Activated B cell treated with CpG ODN at 0.5 μM for 24 hours (primary cell): ENCODE measurements at regions of chr6 and their contacts with region 1.

Region 1: DNA sequence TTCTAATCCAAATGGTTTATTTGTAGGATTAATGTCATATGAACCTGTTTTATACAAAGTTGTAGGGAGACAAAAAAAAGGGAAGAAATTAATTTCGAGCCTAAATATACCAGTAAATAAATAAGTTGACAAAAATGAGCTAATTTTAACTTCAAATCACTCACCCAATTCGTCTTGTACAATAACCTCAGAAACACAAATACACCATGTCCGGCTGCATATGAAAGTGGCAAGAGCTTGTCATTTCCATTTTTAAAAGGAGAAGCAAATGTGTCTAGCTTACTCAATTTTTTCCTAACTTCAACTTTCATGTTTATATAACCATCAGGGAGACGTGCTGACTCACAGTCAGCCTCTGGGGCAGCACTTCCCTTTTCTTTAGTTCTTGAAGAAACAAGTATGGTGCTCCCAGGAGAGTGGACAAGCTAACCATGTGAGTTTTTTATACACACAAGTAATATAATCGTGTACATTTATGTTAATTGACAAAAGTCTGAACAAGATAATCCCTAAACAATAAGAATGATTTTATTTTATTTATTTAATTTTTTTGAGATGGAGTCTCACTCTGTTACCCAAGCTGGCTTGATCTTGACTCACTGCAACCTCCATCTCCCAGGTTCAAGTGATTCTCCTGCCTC is 55.5 kb upstream of the SGK1 start:
- DNase-seq: no peak
- ATAC-seq: peak; percentile 97
- H3K4me3 Mint-ChIP-seq: peak overlapping the region; percentile 53
- H3K27ac Mint-ChIP-seq: peak overlapping the region; percentile 71
- H3K4me1 Mint-ChIP-seq: peaks cover 28% of the 10 kb centered on the region
- H3K27me3 Mint-ChIP-seq: no peaks in the 10 kb centered on the region
- CTCF ChIP-seq: no peak

Region 2: DNA sequence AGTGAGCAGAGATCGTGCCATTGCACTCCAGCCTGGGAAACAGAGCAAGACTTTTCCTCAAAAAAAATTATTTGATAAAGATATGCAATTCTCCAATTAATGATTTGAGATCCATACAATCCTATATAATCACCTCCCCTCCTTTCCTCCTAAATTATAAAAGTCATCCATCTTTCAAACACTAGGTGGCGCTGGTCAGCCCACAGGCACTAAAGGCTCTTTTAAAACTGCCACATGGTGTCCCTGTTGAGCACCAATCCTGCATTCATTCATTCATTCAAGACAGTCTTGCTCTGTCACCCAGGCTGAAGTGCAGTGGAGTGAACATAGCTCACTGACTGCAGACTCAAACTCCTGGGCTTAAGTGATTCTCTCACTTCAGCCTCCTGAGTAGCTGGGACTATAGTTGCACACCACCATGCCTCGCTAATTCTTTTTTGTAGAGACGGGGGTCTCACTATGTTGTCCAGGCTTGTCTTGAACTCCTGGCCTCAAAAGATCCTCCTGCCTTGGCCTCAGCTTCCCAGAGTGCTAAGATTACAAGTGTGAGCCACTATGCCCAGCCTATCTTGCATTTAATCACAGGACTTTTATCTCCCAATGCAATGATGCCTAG is 262.2 kb before region 1 on chr6:
- CTCF ChIA-PET with region 1: no interaction called
- POLR2A ChIA-PET with region 1: no interaction called
- intact Hi-C with region 1: no loop called
- DNase-seq: no peak
- ATAC-seq: no peak
- H3K4me3 Mint-ChIP-seq: no peak overlapping the region
- H3K27ac Mint-ChIP-seq: no peak overlapping the region
- H3K4me1 Mint-ChIP-seq: no peaks in the 10 kb centered on the region
- H3K27me3 Mint-ChIP-seq: peaks cover 17% of the 10 kb centered on the region
- CTCF ChIP-seq: peak; percentile 27

Region 3: DNA sequence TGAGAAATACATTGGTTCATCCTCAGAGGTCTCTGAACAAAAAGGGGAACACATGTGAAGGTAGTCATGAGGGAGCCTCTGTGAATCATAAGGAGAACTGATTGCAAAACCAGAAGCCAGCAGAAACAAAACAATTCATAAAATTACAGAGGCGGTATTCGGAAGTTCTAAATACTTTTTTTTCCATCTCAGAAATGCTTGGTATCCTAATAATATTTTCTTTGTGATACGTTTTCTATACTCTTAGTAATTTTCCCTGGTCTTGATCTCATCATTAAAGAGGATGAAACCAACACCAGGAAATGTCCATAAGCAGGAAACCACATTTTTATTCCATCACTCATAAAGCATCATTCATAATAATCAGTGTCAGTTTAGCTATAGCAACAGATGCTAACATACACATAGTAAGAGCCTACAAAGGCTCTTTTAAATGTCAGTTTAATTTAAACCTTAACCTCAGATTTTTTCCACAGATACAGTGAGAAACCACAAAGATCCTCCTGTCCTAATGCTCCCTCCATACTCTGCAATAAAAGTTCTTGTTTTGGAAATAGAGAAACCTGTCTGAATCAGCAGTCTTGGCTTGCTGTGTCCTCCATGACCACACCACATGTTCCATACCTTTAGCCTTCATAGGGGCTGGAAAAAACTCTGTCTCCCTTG is 84.7 kb before region 1 on chr6:
- CTCF ChIA-PET with region 1: no interaction called
- POLR2A ChIA-PET with region 1: interaction called, 9 read pairs
- intact Hi-C with region 1: loop called (anchors 2 kb)
- DNase-seq: no peak
- ATAC-seq: peak; percentile 83
- H3K4me3 Mint-ChIP-seq: peak overlapping the region; percentile 16
- H3K27ac Mint-ChIP-seq: peak overlapping the region; percentile 54
- H3K4me1 Mint-ChIP-seq: peaks cover 22% of the 10 kb centered on the region
- H3K27me3 Mint-ChIP-seq: no peaks in the 10 kb centered on the region
- CTCF ChIP-seq: no peak